Mammary epithelial cell (primary cell): ENCODE measurements at regions of chr14 and their contacts with region 1.

Region 1: DNA sequence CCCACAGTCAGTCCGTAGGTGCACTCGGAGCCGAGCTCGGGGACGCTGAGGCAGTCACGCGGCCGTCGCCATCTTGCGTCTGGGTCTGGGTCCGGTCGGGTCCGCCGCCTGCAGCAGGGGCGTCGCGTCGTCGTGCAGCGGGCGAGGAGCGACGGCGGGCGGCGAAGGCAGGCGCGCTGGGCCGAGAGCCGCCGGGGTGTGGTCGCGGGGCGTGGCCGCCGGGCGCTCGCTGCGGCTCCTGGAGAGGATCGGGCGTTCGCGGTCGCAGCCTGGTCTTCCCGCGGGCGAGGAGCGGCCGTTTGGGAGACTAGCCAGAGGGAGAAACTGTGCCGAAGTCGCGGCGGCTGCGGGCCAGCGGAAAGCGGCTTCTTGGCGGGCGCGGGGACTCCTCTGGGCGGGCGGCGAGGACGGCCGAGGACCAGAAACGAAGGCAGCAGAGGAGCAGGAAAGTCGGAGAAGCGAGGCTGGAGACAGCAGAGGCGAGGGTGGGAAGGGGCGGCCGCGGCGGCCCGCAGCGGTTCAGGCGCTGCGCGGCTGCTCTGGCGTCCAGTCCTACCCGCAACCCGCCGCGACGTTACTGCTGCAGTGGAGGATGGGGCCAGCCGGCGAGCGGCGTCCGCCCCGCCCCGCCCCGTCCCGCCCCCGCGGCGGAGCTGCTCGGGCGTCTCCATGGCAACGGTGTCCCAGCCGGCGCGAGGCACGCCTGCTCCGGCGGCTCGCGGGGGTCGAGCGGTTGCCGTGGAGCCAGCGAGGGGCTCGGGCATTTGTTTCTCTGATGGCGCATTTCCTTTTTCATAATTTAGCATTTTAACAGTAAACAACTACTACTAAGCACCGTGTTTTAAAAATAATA is at the start of gene PNMA1:
- DNase-seq: peak; percentile 71
- H3K4me3 ChIP-seq: peak within 1 kb of the TSS; percentile 62 to 79 (median 68)
- H3K27ac ChIP-seq: peak within 1 kb of the TSS; percentile 54
- H3K4me1 ChIP-seq: peaks cover 14% of the 10 kb centered on the region
- H3K27me3 ChIP-seq: no peaks in the 10 kb centered on the region
- CTCF ChIP-seq: no peak
- total RNA-seq, gene PNMA1: 15.7 to 30.5 TPM

Region 2: DNA sequence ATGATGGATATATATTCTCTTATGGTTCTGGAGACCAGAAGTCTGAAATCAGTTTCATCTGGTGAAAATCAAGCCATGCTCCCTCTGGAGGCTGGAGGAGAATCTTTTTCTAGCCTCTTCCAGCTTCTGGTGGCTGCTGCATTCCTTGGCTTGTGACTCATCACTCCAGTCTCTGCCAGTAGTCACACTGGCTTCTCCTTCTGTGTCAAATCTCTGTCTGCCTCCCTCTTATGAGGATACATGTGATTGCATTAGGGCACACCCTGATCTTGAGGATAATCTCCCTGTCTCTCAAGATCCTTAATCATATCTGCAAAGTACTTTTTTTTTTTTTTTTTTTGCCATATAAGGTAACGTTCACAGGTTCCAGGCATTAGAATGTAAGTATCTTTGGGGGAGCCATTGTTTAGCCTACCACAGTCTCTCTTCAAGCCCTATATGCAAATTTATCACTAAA is 51.5 kb before region 1 on chr14:
- CTCF ChIA-PET with region 1: no interaction called
- dilution Hi-C with region 1: no loop called
- in situ Hi-C with region 1: no loop called
- intact Hi-C with region 1: loop called (anchors 2 kb)
- DNase-seq: peak; percentile 95
- H3K4me3 ChIP-seq: no peak overlapping the region
- H3K27ac ChIP-seq: no peak overlapping the region
- H3K4me1 ChIP-seq: peaks cover 9% of the 10 kb centered on the region
- H3K27me3 ChIP-seq: no peaks in the 10 kb centered on the region
- CTCF ChIP-seq: peak; percentile 48 to 58

Region 3: DNA sequence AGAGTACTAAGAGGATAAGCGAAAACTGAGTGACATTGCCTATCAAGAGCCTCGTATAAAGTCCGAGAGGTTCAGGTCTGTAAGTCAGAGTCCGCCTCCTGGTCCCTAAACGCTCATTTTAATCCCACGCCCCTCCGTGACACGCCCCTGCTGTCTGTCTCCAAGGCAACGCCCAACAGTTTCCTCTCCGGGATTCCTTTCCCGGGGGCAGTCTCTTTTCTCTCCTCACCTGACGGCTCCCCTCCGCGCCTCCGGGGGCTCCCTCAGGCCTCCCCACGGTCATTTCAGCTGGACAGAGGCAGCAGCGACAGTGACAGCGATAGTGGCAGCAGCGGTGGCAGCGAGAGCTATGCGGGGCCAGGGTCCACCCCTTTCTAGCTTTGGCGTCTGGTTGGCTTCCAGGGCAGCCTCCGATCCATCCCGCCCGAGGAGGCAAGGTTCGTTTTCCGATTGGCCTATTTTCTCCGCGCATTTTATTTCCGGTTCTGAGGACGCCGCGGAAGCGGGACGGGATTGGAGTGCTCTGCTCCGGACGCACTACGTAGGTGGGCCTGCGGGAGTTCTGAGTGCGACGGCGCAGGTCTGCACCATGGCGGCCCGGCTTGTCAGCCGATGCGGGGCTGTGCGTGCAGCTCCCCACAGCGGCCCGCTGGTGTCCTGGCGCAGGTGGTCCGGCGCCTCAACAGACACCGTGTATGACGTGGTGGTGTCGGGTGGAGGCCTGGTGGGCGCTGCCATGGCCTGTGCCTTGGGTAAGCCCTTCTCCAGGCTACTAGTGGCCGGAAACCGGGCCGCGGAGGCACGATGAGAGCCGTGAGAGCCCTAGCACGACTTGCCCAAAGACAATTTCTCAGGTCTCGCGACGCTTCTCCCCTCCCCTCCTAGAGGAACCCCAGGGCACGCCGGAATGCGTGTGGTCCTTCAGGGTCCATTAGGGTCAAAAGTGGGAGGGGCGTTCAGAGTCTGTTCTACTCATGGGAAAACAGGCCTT is 236.0 kb after region 1 on chr14 and contains the starts of genes COQ6 and FAM161B:
- CTCF ChIA-PET with region 1: no interaction called
- dilution Hi-C with region 1: no loop called
- in situ Hi-C with region 1: no loop called
- intact Hi-C with region 1: loop called (anchors 10 kb)
- DNase-seq: peak; percentile 98
- H3K4me3 ChIP-seq: peak within 1 kb of the TSS; percentile 68 to 91 (median 85)
- H3K27ac ChIP-seq: peak within 1 kb of the TSS; percentile 92
- H3K4me1 ChIP-seq: no peaks in the 10 kb centered on the region
- H3K27me3 ChIP-seq: no peaks in the 10 kb centered on the region
- CTCF ChIP-seq: peak in 1 of 2 donors; percentile 36
- total RNA-seq, gene COQ6: 20.0 to 22.6 TPM
- total RNA-seq, gene FAM161B: 3.5 to 4.0 TPM

Region 4: GRCh38 chr14:74392616-74393570 is 678.9 kb after region 1 on chr14:
- CTCF ChIA-PET with region 1: no interaction called
- dilution Hi-C with region 1: no loop called
- in situ Hi-C with region 1: no loop called
- intact Hi-C with region 1: no loop called
- DNase-seq: no peak
- H3K4me3 ChIP-seq: no peak overlapping the region
- H3K27ac ChIP-seq: no peak overlapping the region
- H3K4me1 ChIP-seq: no peaks in the 10 kb centered on the region
- H3K27me3 ChIP-seq: peaks cover 3% of the 10 kb centered on the region
- CTCF ChIP-seq: no peak